Naive thymus-derived CD8-positive, alpha-beta T cell (primary cell): ENCODE measurements at regions of chr20 and their contacts with region 1.

Region 1: DNA sequence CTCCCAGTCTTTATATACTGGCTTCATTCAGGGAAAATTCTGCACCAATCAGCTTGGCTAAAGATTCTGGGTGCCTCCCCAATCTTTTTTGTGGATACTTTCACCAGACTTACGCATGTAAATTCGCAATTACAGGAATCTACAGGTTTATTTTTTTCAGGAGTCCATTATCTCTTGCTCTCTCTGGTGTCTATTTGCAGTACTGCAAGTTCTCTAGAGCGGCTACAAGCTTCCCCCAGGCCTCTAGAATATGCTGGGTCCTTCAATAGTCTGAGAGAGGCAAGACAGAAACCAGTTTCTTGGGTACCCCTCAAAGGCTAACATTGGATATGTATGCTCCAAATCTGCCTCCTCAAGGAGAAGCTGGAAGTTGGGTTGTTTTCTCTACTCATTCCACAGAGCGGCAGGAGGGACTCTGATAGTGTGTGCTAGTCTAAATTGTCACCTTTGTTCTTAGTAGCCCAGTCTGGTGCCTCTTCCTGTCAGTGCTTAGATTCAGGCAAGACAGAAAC is 58.5 kb downstream of the SUN5 start:
- DNase-seq: peak in 5 of 10 donors; percentile 23 to 67 (median 49)
- ATAC-seq: peak; percentile 93 to 96
- H3K4me3 Mint-ChIP-seq: peak overlapping the region in 9 of 10 donors; percentile 49 to 81 (median 64)
- H3K27ac Mint-ChIP-seq: peak overlapping the region; percentile 68 to 95 (median 88)
- H3K4me1 Mint-ChIP-seq: peaks cover 22 to 42% (median 38%) of the 10 kb centered on the region in 4 donors
- H3K27me3 Mint-ChIP-seq: no peaks in the 10 kb centered on the region

Region 2: DNA sequence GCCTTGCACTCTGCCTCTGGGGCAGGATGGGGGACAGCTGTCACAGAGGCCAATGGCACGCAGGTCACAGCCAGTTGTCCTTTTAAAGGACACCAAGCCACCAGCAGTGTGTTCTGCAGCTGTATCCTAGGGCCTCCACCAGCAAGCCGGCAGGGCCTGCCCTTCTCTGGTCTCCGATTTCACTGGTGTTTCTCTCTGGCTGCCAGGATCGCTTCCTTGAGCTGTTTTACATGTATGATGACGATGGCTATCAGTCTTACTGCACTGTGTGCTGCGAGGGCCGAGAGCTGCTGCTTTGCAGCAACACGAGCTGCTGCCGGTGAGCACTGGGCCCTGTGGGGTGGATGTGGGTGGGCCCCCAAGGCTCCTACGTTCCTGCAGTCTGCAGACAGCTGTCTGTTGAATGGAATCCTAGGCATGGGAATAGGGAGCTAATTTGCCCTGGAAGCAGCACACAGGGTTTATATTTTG is 148.8 kb before region 1 on chr20:
- POLR2A ChIA-PET with region 1: no interaction called
- DNase-seq: no peak
- ATAC-seq: no peak
- H3K4me3 Mint-ChIP-seq: peak overlapping the region in 6 of 10 donors; percentile 40 to 65 (median 46)
- H3K27ac Mint-ChIP-seq: peak overlapping the region; percentile 2 to 95 (median 80)
- H3K4me1 Mint-ChIP-seq: peaks cover 21 to 53% (median 49%) of the 10 kb centered on the region in 4 donors
- H3K27me3 Mint-ChIP-seq: no peaks in the 10 kb centered on the region

Region 3: GRCh38 chr20:32966881-32967781 is 21.4 kb after region 1 on chr20:
- POLR2A ChIA-PET with region 1: interaction called, 25 read pairs
- DNase-seq: peak in 9 of 10 donors; percentile 34 to 85 (median 71)
- ATAC-seq: peak; percentile 43 to 48
- H3K4me3 Mint-ChIP-seq: peak overlapping the region in 9 of 10 donors; percentile 63 to 87 (median 77)
- H3K27ac Mint-ChIP-seq: peak overlapping the region in 1 of 10 donors; percentile 98
- H3K4me1 Mint-ChIP-seq: peaks cover 18 to 77% (median 32%) of the 10 kb centered on the region in 4 donors
- H3K27me3 Mint-ChIP-seq: no peaks in the 10 kb centered on the region

Region 4: DNA sequence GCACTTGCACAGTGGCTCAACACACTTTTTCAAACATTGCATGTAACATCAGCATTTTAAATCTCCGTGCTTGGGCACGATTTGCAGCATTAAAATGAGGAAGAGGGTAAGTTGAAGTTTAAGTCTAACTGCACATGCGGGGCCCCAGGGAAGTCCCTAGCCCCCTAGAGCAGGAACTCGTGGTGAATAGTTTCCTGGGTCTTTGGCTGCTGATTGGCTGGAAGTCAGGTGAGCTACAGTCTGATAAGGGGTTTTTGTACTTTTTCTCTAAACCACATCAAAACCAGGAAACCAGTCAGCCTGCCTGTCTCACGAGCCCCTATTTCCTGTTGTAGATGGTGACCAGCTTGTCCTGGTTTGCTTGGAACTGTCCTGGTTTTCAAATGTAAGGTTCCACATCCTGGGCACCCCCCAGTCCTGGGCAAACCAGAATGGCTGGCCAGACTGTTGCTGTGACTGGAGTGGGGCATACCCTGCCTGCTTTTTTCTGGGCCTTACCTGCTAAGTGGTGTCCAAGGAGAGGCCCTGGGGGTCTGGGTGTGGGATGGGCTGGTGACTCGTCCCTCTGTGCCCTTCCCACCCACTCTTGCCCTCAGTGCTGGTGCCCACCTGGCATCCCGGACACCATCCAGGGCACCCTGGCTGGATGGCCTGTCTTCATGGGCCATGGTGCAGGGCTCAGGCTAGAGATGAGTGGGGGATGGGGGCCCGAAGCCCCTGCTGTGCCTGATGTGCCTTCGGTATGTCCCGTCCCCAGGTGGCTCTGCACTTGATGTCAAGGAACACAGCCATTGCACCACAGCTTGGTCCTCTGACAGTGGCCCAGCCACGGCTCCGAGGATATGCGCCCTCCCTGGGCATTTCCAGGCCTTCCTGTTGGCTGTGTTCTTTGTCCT is 26.7 kb after region 1 on chr20:
- POLR2A ChIA-PET with region 1: interaction called, 25 read pairs
- DNase-seq: peak; percentile 62 to 96 (median 91)
- ATAC-seq: peak; percentile 83 to 86
- H3K4me3 Mint-ChIP-seq: no peak overlapping the region
- H3K27ac Mint-ChIP-seq: no peak overlapping the region
- H3K4me1 Mint-ChIP-seq: peaks cover 10 to 49% (median 26%) of the 10 kb centered on the region in 4 donors
- H3K27me3 Mint-ChIP-seq: no peaks in the 10 kb centered on the region